Tibial artery (tissue), 4 donors: ENCODE measurements at regions of chr19 and their contacts with region 1.

Region 1: DNA sequence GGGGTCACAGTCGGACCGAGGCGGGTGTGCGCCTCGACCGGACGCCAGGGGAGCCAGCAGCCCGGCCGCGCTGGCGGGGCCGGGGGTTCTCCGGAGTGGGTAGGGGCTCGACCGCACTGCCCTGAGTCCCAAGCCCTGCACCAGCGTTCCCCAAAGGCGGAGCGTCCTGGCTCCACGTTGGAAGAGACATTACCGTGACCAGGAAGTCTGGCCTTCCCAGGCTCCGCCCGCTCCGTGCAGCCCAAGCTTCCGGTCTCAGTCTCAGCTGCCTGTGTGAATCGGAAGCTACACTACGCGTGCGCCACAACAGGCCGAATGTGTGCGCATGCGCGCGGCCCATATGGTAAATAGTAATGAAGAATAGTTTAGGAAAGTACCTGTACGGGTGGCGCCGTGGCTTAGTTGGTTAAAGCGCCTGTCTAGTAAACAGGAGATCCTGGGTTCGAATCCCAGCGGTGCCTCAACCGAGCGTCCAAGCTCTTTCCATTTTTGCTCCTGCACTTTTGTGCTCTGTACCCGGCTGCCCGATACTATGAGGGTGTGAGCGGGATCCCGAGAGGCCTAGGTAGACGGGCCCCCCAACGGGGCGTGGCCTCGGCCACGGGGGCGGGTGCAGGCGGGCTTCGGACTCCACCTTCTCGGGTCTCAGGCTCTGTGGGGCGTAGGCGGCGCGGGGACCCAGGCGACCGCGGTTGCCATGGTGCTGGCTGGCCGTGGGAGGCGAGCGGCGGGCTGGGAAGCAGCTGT is 17.3 kb upstream of the LRP3 start:
- DNase-seq: peak; percentile 97 to 98
- H3K4me3 ChIP-seq: peak overlapping the region; percentile 88 to 98
- H3K27ac ChIP-seq: peak overlapping the region; percentile 98
- H3K4me1 ChIP-seq: peaks cover 0 to 20% (median 19%) of the 10 kb centered on the region in 4 donors
- H3K27me3 ChIP-seq: no peaks in the 10 kb centered on the region
- CTCF ChIP-seq: peak; percentile 21 to 26

Region 2: DNA sequence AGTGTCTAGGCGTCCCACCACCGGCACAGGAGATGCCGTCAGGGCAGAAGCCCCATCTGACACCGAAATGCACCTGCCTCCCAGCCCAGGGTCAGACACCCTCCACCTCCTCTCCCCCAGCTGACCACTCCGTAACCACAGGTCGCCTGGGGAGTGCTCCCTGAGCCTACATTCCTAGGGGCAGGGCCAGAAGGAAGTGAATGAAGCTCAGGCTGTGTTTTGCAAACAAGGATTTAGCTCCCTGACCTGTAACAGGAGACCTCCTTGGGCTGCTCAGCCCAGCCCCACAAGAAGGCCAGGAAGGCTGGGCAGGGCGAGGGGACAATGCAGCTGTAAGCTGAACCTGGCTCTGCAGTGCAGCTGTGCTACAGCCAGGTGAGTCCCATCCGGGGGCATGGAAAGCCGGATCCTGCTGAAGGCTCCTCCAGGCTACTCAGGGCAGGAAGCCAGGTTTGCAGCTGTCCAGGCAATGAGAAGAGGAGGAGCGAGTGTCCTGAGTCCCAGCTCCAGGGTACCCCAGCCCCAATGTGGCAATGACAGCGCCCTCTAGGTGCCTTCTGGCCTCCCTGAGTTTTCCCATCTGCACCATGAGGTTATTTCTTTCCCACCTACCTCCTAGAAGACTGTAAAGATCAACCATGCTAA is 154.2 kb before region 1 on chr19:
- intact Hi-C with region 1: no loop called
- DNase-seq: no peak
- H3K4me3 ChIP-seq: no peak overlapping the region
- H3K27ac ChIP-seq: no peak overlapping the region
- H3K4me1 ChIP-seq: no peaks in the 10 kb centered on the region
- H3K27me3 ChIP-seq: peaks cover 0 to 3% of the 10 kb centered on the region in 2 donors
- CTCF ChIP-seq: no peak

Region 3: GRCh38 chr19:33143897-33144405 is 32.9 kb before region 1 on chr19:
- intact Hi-C with region 1: loop called (anchors 5 kb)
- DNase-seq: peak; percentile 54 to 68
- H3K4me3 ChIP-seq: no peak overlapping the region
- H3K27ac ChIP-seq: no peak overlapping the region
- H3K4me1 ChIP-seq: no peaks in the 10 kb centered on the region
- H3K27me3 ChIP-seq: peaks cover 0 to 24% of the 10 kb centered on the region in 2 donors
- CTCF ChIP-seq: peak; percentile 88 to 94